ENCODE measurements at regions of chr17 and their contacts with region 1.

Region 1: DNA sequence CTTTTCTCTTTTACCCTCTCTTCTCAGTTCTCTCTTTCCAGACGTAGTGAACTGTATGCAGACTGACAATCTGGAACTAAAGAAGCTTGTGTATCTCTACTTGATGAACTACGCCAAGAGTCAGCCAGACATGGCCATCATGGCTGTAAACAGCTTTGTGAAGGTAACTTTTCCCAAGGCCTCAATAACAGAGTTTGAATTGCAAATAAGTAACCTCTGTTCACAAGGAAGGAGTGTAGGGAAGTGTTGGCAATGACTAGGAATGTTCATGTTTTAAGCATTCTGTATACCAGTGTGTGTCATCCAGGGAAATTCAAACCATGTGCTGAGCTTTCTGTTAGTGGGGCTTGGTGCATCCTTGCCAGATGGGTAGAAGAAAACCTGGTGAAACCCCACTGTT is 18.6 kb downstream of the AP2B1 start:
- DNase-seq: no peak
- H3K4me3 ChIP-seq: no peak overlapping the region
- H3K4me1 ChIP-seq: no peaks in the 10 kb centered on the region
- H3K27me3 ChIP-seq: no peaks in the 10 kb centered on the region

Region 2: DNA sequence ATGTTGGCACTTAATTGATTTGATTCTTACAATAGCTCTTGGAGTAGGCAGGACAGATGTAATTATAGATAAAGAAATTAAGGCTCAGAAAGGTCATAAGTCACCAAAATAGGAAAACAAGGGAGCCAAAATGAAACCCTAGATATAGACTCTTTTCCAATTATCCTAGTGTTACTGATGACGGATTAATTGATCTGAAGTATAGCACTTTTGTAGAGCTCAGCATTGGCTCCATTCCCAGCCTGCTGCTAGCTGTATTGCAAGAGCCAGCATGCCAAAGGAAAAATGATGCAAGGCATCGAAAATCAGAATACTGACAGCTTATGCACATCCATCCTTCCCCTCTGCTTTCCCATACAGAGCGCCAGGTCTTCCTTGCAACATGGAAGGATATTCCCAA is 104.2 kb after region 1 on chr17:
- in situ Hi-C with region 1: no loop called
- DNase-seq: no peak
- H3K4me3 ChIP-seq: no peak overlapping the region
- H3K4me1 ChIP-seq: peaks cover 2% of the 10 kb centered on the region; the same call in 1 of the 2 replicates
- H3K27me3 ChIP-seq: no peaks in the 10 kb centered on the region

Region 3: GRCh38 chr17:35747540-35748017 is 141.9 kb after region 1 on chr17:
- in situ Hi-C with region 1: loop called (anchors 5 kb)
- DNase-seq: peak; percentile 75 to 87
- H3K4me3 ChIP-seq: no peak overlapping the region
- H3K4me1 ChIP-seq: no peaks in the 10 kb centered on the region
- H3K27me3 ChIP-seq: no peaks in the 10 kb centered on the region

Measured in HAP-1 (cell line).